ENCODE measurements at regions of chr1 and their contacts with region 1.

Region 1: GRCh38 chr1:3796215-3797061 is at the start of gene LRRC47:
- DNase-seq: peak; percentile 90 to 93
- ATAC-seq: peak; percentile 95 to 96
- H3K4me3 ChIP-seq: peak within 1 kb of the TSS; percentile 72 to 92 (median 86)
- H3K27ac ChIP-seq: peak within 1 kb of the TSS; percentile 74 to 92 (median 84)
- H3K4me1 ChIP-seq: peaks cover 30 to 31% of the 10 kb centered on the region in 2 donors
- H3K27me3 ChIP-seq: no peaks in the 10 kb centered on the region
- CTCF ChIP-seq: peak in 3 of 5 experiments; percentile 19 to 36 (median 24)
- POLR2A ChIP-seq: peak; percentile 58 to 84
- total RNA-seq, gene LRRC47: 64.2 to 97.2 (median 89.9) TPM

Region 2: GRCh38 chr1:3491291-3492246 is 304.9 kb before region 1 on chr1:
- in situ Hi-C with region 1: no loop called
- intact Hi-C with region 1: loop called (anchors 10 kb)
- DNase-seq: peak; percentile 56 to 57
- ATAC-seq: peak; percentile 61 to 86
- H3K4me3 ChIP-seq: no peak overlapping the region
- H3K27ac ChIP-seq: no peak overlapping the region
- H3K4me1 ChIP-seq: peaks cover 0 to 2% of the 10 kb centered on the region in 2 donors
- H3K27me3 ChIP-seq: no peaks in the 10 kb centered on the region
- CTCF ChIP-seq: peak; percentile 85 to 100 (median 99)
- POLR2A ChIP-seq: no peak

Region 3: GRCh38 chr1:3717715-3718601 is 78.5 kb before region 1 on chr1:
- in situ Hi-C with region 1: loop called in 1 of 4 experiments (anchors 25 kb)
- intact Hi-C with region 1: no loop called
- DNase-seq: no peak
- ATAC-seq: no peak
- H3K4me3 ChIP-seq: no peak overlapping the region
- H3K27ac ChIP-seq: no peak overlapping the region
- H3K4me1 ChIP-seq: peaks cover 17 to 22% of the 10 kb centered on the region in 2 donors
- H3K27me3 ChIP-seq: no peaks in the 10 kb centered on the region
- CTCF ChIP-seq: no peak
- POLR2A ChIP-seq: no peak

Region 4: DNA sequence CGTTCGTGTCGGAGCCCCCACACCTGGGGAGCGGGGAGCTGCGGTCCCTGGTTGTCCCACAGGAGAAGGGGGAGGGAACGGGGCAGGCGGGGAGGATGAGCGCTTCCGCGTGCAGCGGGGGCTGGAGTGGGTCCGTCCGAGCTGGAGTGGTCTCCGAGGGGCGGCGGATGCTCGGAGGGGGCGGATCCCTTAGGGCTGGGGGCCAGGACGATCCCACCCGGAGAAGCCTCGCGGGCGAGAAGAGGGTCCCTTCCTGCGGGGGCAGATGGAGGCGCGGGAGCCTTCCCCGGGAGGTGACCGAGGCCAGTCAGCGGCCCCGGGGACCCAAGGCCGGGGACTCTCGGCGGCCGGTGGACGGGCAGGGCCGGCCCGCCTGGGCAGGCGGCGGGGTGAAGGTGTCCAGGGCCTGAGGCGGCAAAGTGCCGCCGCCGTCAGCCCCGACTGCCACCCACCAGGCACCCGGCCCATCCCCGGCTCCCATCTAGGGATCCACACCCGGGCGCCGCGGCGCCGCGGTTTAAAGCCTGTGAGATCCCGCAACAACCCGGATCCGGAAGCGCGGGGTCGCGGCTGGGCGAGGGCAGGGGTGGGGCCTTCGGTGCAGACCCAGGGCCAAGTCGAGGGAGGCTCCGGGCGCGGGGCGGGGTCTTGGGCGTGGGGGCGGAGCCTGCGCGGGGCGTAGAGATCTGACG is 49.5 kb before region 1 on chr1:
- in situ Hi-C with region 1: no loop called
- intact Hi-C with region 1: loop called (anchors 1 kb)
- DNase-seq: peak; percentile 74 to 86
- ATAC-seq: peak; percentile 89
- H3K4me3 ChIP-seq: peak overlapping the region; percentile 75 to 83 (median 79)
- H3K27ac ChIP-seq: peak overlapping the region; percentile 79 to 89 (median 86)
- H3K4me1 ChIP-seq: peaks cover 20 to 33% of the 10 kb centered on the region in 2 donors
- H3K27me3 ChIP-seq: no peaks in the 10 kb centered on the region
- CTCF ChIP-seq: no peak
- POLR2A ChIP-seq: peak; percentile 75 to 83

Region 5: DNA sequence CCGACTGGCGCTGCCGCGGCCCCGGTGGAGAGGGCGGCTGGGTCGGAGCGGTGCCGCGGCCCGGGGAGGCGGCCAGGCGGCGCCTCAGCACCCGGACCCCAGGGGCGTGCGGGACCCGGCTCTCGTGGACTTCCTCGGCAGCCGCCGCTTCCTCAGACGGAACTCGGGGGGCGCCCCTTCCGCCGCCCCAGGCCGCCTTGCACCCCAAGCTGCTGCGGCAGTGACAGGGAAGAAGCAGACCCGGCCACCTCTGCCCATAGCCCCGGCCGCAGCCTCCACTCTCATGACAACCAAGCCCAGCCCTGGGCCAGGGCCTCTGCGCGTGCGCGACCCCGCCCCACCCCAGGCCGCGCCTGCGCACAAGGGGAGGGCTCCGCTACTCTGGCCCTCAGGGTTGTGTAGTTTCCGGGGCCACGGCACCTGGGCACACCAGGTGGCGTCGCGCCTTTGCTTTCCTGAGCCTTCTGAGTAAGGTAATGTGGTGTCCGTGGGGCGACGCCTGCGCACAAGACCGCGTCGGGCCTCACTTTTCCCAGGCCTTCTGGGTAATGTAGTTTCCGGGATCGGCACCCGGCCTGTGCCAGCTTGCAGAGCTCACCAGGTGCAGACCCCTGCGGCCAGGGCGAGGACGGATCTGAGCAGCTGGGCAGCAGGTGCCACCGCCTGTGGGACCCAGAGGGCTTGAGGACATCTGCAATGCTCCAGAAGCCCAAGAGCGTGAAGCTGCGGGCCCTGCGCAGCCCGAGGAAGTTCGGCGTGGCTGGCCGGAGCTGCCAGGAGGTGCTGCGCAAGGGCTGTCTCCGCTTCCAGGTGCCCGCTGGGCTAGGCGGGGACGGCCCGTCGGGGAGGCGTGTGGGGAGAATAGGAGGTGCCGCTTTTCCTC is 60.7 kb after region 1 on chr1 and contains the starts of genes CEP104 and DFFB:
- in situ Hi-C with region 1: no loop called
- intact Hi-C with region 1: loop called (anchors 5 kb)
- DNase-seq: peak; percentile 89 to 97
- ATAC-seq: peak; percentile 94 to 95
- H3K4me3 ChIP-seq: peak within 1 kb of the TSS; percentile 66 to 92 (median 84)
- H3K27ac ChIP-seq: peak within 1 kb of the TSS; percentile 78 to 87 (median 84)
- H3K4me1 ChIP-seq: peaks cover 19 to 22% of the 10 kb centered on the region in 2 donors
- H3K27me3 ChIP-seq: no peaks in the 10 kb centered on the region
- CTCF ChIP-seq: no peak
- POLR2A ChIP-seq: peak; percentile 50 to 56
- total RNA-seq, gene CEP104: 16.6 to 39.0 (median 21.9) TPM
- total RNA-seq, gene DFFB: 1.3 to 3.6 (median 3.1) TPM

Region 6: GRCh38 chr1:3900119-3900968 is 103.9 kb after region 1 on chr1 and contains the start of gene C1orf174:
- in situ Hi-C with region 1: loop called in 1 of 4 experiments (anchors 25 kb)
- intact Hi-C with region 1: loop called (anchors 1 kb)
- DNase-seq: peak; percentile 94 to 97
- ATAC-seq: peak; percentile 89 to 90
- H3K4me3 ChIP-seq: peak within 1 kb of the TSS; percentile 91 to 99 (median 96)
- H3K27ac ChIP-seq: peak within 1 kb of the TSS; percentile 97 to 99 (median 98)
- H3K4me1 ChIP-seq: peaks cover 8 to 9% of the 10 kb centered on the region in 2 donors
- H3K27me3 ChIP-seq: no peaks in the 10 kb centered on the region
- CTCF ChIP-seq: no peak
- POLR2A ChIP-seq: peak; percentile 47 to 50
- total RNA-seq, gene C1orf174: 10.1 to 28.5 (median 13.5) TPM